HAP-1 (cell line): ENCODE measurements at regions of chr2 and their contacts with region 1.

Region 1: DNA sequence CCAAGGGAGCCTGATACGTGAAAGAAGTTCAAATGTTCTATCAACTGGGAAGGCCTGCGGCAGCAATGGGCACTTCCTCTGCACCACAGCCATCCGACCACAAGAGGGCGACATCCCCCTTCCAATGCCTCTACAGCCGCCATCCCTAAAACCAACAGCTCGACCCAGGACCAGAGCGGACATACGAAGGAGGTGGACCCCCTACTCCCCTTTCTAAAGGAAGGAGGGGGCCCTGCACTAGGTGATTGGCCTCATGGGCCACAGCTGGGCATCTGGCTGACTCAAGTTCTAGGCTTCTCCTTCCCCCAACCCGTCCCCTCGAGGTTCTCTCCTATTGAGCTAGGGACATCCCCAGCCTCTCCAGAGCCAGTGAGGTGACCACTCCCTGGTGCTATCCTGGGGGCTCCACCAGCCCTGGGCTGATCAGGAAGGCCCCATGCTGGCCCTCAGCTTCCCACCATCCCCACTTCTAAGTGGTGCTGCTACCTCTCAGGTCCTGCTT is 217.2 kb downstream of the TNS1 start:
- DNase-seq: peak; percentile 52 to 86
- H3K4me3 ChIP-seq: no peak overlapping the region
- H3K4me1 ChIP-seq: no peaks in the 10 kb centered on the region
- H3K27me3 ChIP-seq: no peaks in the 10 kb centered on the region

Region 2: GRCh38 chr2:217886720-217887309 is 101.2 kb after region 1 on chr2:
- in situ Hi-C with region 1: loop called (anchors 5 kb)
- DNase-seq: peak; percentile 42 to 82
- H3K4me3 ChIP-seq: no peak overlapping the region
- H3K4me1 ChIP-seq: no peaks in the 10 kb centered on the region
- H3K27me3 ChIP-seq: no peaks in the 10 kb centered on the region; the same call in 1 of the 2 replicates

Region 3: DNA sequence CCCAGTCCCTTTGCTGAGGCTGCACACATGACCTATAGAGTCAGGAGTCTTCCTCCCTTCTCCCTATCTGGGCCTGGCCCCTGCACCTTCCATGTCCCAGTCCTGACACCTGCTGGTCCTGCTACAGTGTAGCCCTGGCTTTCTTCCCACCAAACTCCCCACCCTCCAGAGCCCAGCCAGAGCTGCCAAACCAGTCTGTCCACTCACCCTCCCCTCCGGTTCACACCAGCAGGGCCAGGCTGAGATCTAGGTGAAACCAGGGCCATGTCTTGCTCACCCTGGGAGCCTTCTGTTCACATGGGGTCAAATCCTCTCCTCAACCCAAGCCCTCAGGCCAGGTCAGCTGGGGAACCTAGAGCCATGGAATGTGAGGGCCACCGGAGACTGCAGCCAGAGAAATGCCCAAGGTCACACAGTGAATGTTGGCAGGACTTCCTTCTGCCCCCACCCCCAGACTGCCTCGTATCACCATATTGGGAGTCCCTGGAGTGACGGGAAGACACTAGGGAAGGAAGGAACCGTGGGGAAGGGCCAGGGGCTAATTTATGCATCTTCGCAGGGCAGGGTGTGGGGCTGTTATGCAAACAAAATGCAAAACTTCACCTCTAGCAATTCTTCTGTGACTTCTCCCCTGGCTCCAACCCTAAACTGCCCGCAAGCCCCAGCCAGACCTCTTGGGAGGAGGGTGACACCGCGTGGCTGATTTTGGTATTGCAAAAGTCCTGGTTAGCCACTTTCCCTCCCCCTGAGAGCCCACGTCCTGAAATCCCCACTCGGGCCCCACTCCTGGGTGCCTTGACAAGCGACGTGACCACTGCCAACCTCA is 202.6 kb after region 1 on chr2:
- in situ Hi-C with region 1: loop called (anchors 5 kb)
- DNase-seq: peak; percentile 40 to 88
- H3K4me3 ChIP-seq: no peak overlapping the region
- H3K4me1 ChIP-seq: no peaks in the 10 kb centered on the region
- H3K27me3 ChIP-seq: no peaks in the 10 kb centered on the region

Region 4: GRCh38 chr2:218066926-218067515 is 281.4 kb after region 1 on chr2:
- in situ Hi-C with region 1: loop called (anchors 5 kb)
- DNase-seq: no peak
- H3K4me3 ChIP-seq: no peak overlapping the region
- H3K4me1 ChIP-seq: no peaks in the 10 kb centered on the region
- H3K27me3 ChIP-seq: peaks cover 8% of the 10 kb centered on the region